B cell (primary cell): ENCODE measurements at regions of chr1 and their contacts with region 1.

Region 1: DNA sequence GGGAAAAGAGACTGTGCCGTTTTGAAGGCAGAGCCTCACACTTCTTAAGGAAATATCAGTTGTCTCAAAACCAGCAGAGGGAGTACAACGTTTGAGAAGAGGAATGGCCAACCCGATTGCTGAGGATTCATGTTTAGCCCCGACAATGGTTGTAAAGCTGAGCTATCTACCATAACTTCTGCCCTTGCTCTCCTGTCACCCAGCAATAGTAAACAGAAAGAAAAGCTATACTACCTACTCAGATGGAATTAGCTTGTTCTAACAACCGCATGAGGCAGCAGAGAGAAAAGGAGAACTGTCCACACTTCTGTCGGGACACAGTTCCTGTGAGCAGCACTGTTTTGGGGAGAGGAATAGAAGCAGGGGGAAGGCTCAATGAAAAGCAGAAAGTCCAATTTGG is 91.2 kb downstream of the SLC45A1 start:
- DNase-seq: peak; percentile 63
- ATAC-seq: peak; percentile 87
- H3K4me3 ChIP-seq: no peak overlapping the region
- H3K4me3 Mint-ChIP-seq: peak overlapping the region; percentile 11
- H3K27ac ChIP-seq: peak overlapping the region; percentile 6 to 51
- H3K27ac Mint-ChIP-seq: peak overlapping the region; percentile 27
- H3K4me1 ChIP-seq: peaks cover 11 to 21% of the 10 kb centered on the region in 2 donors
- H3K4me1 Mint-ChIP-seq: peaks cover 38% of the 10 kb centered on the region
- H3K27me3 ChIP-seq: no peaks in the 10 kb centered on the region
- H3K27me3 Mint-ChIP-seq: no peaks in the 10 kb centered on the region
- CTCF ChIP-seq: peak; percentile 71

Region 2: GRCh38 chr1:8040586-8040985 is 368.5 kb before region 1 on chr1:
- CTCF ChIA-PET with region 1: no interaction called
- POLR2A ChIA-PET with region 1: no interaction called
- intact Hi-C with region 1: no loop called
- DNase-seq: no peak
- ATAC-seq: no peak
- H3K4me3 ChIP-seq: no peak overlapping the region
- H3K4me3 Mint-ChIP-seq: no peak overlapping the region
- H3K27ac ChIP-seq: no peak overlapping the region
- H3K27ac Mint-ChIP-seq: no peak overlapping the region
- H3K4me1 ChIP-seq: no peaks in the 10 kb centered on the region
- H3K4me1 Mint-ChIP-seq: no peaks in the 10 kb centered on the region
- H3K27me3 ChIP-seq: no peaks in the 10 kb centered on the region
- H3K27me3 Mint-ChIP-seq: peaks cover 19% of the 10 kb centered on the region
- CTCF ChIP-seq: no peak

Region 3: GRCh38 chr1:8431019-8431418 is 21.9 kb after region 1 on chr1:
- CTCF ChIA-PET with region 1: interaction called, 24 read pairs
- POLR2A ChIA-PET with region 1: no interaction called
- intact Hi-C with region 1: no loop called
- DNase-seq: peak; percentile 71
- ATAC-seq: peak; percentile 28
- H3K4me3 ChIP-seq: no peak overlapping the region
- H3K4me3 Mint-ChIP-seq: peak overlapping the region; percentile 49
- H3K27ac ChIP-seq: peak overlapping the region; percentile 43 to 78
- H3K27ac Mint-ChIP-seq: peak overlapping the region; percentile 90
- H3K4me1 ChIP-seq: peaks cover 64 to 79% of the 10 kb centered on the region in 2 donors
- H3K4me1 Mint-ChIP-seq: peaks cover 86% of the 10 kb centered on the region
- H3K27me3 ChIP-seq: no peaks in the 10 kb centered on the region
- H3K27me3 Mint-ChIP-seq: no peaks in the 10 kb centered on the region
- CTCF ChIP-seq: peak; percentile 52

Region 4: GRCh38 chr1:8456308-8456912 is 47.3 kb after region 1 on chr1:
- CTCF ChIA-PET with region 1: interaction called, 5 read pairs
- POLR2A ChIA-PET with region 1: no interaction called
- intact Hi-C with region 1: loop called (anchors 10 kb)
- DNase-seq: no peak
- ATAC-seq: no peak
- H3K4me3 ChIP-seq: no peak overlapping the region
- H3K4me3 Mint-ChIP-seq: no peak overlapping the region
- H3K27ac ChIP-seq: no peak overlapping the region
- H3K27ac Mint-ChIP-seq: no peak overlapping the region
- H3K4me1 ChIP-seq: peaks cover 25% of the 10 kb centered on the region in 2 donors
- H3K4me1 Mint-ChIP-seq: peaks cover 38% of the 10 kb centered on the region
- H3K27me3 ChIP-seq: no peaks in the 10 kb centered on the region
- H3K27me3 Mint-ChIP-seq: no peaks in the 10 kb centered on the region
- CTCF ChIP-seq: no peak

Region 5: GRCh38 chr1:8497210-8497801 is 88.2 kb after region 1 on chr1:
- CTCF ChIA-PET with region 1: interaction called, 11 read pairs
- POLR2A ChIA-PET with region 1: no interaction called
- intact Hi-C with region 1: no loop called
- DNase-seq: peak; percentile 52
- ATAC-seq: peak; percentile 46
- H3K4me3 ChIP-seq: peak overlapping the region in 3 of 5 experiments; percentile 7 to 39 (median 8)
- H3K4me3 Mint-ChIP-seq: peak overlapping the region; percentile 78
- H3K27ac ChIP-seq: peak overlapping the region; percentile 88 to 93
- H3K27ac Mint-ChIP-seq: peak overlapping the region; percentile 91
- H3K4me1 ChIP-seq: peaks cover 50 to 60% of the 10 kb centered on the region in 2 donors
- H3K4me1 Mint-ChIP-seq: peaks cover 61% of the 10 kb centered on the region
- H3K27me3 ChIP-seq: no peaks in the 10 kb centered on the region
- H3K27me3 Mint-ChIP-seq: no peaks in the 10 kb centered on the region
- CTCF ChIP-seq: no peak

Region 6: DNA sequence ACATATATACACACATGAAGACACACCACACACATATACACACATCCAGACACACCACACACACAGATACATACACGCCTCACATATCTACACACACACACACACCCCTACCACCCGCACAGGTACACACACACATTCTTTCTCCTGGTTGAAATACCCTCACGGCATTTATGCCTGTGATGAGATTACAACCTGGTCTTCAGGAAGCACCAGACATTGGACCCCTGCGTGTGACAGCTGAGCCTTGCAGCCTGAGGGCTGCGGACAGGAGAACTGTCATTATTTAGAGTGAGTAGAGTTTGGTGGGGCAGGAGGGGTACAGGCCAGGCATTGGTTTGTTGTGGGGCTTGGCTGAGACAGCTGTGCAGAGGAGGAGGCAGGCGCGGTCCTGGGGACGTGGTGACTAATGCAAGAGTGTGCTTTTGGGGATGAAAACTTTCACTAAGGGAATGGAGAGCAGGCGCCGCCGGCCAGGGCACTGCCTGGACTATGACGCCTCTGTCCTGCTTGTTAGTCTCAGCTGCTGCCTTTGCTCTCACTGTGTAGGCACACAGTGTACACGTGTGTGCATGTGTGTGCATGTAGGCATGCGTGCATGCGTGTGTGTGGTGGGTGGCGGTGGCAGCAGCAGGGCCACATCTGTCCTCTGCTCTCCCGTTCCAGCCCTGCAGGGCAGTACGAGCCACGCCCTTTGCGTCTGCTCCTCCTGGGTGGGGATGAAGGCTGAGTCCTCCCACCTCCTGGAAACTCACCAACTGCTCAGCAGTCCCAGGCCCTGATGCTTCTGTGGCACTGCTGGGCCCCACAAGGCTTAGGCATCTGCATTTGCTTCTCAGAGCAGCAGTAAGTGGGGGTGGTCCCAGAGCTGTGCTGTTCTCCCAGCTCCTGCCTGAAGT is 941.2 kb after region 1 on chr1:
- CTCF ChIA-PET with region 1: no interaction called
- POLR2A ChIA-PET with region 1: no interaction called
- intact Hi-C with region 1: no loop called
- DNase-seq: no peak
- ATAC-seq: no peak
- H3K4me3 ChIP-seq: no peak overlapping the region
- H3K4me3 Mint-ChIP-seq: no peak overlapping the region
- H3K27ac ChIP-seq: no peak overlapping the region
- H3K27ac Mint-ChIP-seq: no peak overlapping the region
- H3K4me1 ChIP-seq: no peaks in the 10 kb centered on the region
- H3K4me1 Mint-ChIP-seq: peaks cover 11% of the 10 kb centered on the region
- H3K27me3 ChIP-seq: no peaks in the 10 kb centered on the region
- H3K27me3 Mint-ChIP-seq: no peaks in the 10 kb centered on the region
- CTCF ChIP-seq: no peak